GM12878 (cell line): ENCODE measurements at regions of chr20 and their contacts with region 1.

Region 1: DNA sequence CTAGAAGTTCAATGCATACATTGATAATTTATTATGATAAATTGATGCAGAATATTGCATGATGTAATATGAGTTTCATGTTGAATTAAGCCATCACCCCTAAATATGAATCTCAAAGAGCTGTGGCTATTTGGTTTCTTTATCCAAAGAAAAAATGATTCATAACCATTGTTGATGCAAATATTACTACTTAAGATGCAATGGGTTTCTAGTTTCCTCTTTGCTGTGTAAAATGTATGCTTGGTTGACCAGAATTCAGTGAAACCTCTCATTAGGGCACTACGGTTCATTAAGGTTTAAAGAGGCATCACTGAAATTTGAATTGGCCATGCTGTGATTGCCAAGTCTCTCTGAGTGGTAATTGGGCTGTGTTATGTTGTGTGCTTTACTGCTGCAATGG is 492.5 kb upstream of the FLRT3 start:
- DNase-seq: peak; percentile 86
- ATAC-seq: peak; percentile 82
- H3K4me3 ChIP-seq: no peak overlapping the region
- H3K27ac ChIP-seq: peak overlapping the region; percentile 46; the same call in 1 of the 2 replicates
- H3K4me1 ChIP-seq: peaks cover 40% of the 10 kb centered on the region
- H3K27me3 ChIP-seq: no peaks in the 10 kb centered on the region
- CTCF ChIP-seq: no peak
- EP300 ChIP-seq: peak; percentile 60 to 79; a peak in 3 of 4 replicates
- POLR2A ChIP-seq: no peak
- RAD21 ChIP-seq: no peak

Region 2: DNA sequence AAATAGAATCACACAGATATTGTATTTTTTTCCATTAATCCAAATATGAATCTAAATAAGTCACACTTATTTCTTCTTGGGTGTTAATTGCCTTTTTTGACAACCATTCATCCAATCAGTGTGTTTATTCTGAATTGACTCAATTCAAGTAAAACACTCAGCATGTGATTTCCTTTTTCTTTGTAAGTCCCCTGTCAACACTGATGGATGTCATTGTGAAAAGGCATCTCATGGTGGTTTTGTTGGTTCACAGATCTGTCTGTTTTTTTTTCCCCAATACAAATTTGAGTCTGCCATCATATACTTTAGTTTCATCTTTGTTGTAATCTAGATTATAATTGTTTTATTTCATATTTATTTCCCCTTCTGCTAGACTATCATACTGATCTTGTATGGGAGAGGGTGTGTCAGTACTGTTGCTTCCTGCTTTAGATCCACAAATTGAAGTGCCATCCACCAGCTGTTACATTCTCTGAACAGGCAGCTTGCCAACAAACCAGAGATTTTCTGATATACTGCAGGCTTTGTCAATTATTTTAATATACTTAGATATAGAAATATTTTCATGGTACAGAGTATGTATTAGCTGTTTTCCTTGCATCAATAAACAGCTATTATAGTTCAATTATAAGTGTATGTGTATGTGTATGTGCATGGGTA is 428.3 kb before region 1 on chr20:
- CTCF ChIA-PET with region 1: no interaction called
- POLR2A ChIA-PET with region 1: no interaction called
- RAD21 ChIA-PET with region 1: no interaction called
- SMC1A ChIA-PET with region 1: no interaction called
- in situ Hi-C with region 1: no loop called
- intact Hi-C with region 1: loop called (anchors 5 kb)
- DNase-seq: no peak
- ATAC-seq: peak; percentile 78
- H3K4me3 ChIP-seq: no peak overlapping the region
- H3K27ac ChIP-seq: no peak overlapping the region
- H3K4me1 ChIP-seq: no peaks in the 10 kb centered on the region
- H3K27me3 ChIP-seq: no peaks in the 10 kb centered on the region
- CTCF ChIP-seq: no peak
- EP300 ChIP-seq: peak; percentile 84 to 89; a peak in 3 of 4 replicates
- POLR2A ChIP-seq: no peak
- RAD21 ChIP-seq: no peak

Region 3: DNA sequence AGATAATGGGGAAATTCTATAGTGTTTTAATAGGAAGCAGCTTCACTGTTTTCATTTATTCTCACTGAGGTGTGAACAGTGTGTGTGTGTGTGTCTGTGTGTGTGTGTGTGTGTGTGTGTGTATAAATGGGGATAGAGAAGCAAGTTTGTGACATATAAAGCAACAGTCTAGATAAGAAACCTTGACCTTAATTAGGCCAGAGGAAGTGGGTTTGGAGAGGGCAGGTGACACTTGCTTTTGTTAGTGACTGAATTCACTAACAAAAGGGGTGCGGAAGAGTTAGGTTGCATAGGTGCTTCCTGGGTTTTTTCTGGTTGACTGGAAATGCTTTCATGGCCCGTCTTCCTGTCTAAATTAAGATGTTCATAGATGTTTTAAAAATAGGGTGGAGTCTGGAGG is 23.2 kb after region 1 on chr20:
- CTCF ChIA-PET with region 1: interaction called, 3 read pairs
- POLR2A ChIA-PET with region 1: no interaction called
- RAD21 ChIA-PET with region 1: no interaction called
- SMC1A ChIA-PET with region 1: interaction called, 8 read pairs
- in situ Hi-C with region 1: no loop called
- intact Hi-C with region 1: loop called (anchors 1 kb)
- DNase-seq: peak; percentile 71
- ATAC-seq: peak; percentile 95
- H3K4me3 ChIP-seq: no peak overlapping the region
- H3K27ac ChIP-seq: peak overlapping the region; percentile 15; the same call in 1 of the 2 replicates
- H3K4me1 ChIP-seq: peaks cover 7% of the 10 kb centered on the region
- H3K27me3 ChIP-seq: no peaks in the 10 kb centered on the region
- CTCF ChIP-seq: no peak
- EP300 ChIP-seq: peak; percentile 31 to 41; a peak in 1 of 4 replicates
- POLR2A ChIP-seq: no peak
- RAD21 ChIP-seq: no peak

Region 4: GRCh38 chr20:14878768-14879697 is 49.1 kb after region 1 on chr20:
- CTCF ChIA-PET with region 1: no interaction called
- POLR2A ChIA-PET with region 1: no interaction called
- RAD21 ChIA-PET with region 1: no interaction called
- SMC1A ChIA-PET with region 1: interaction called, 3 read pairs
- in situ Hi-C with region 1: no loop called
- intact Hi-C with region 1: loop called (anchors 2 kb)
- DNase-seq: no peak
- ATAC-seq: peak; percentile 91
- H3K4me3 ChIP-seq: no peak overlapping the region
- H3K27ac ChIP-seq: no peak overlapping the region
- H3K4me1 ChIP-seq: no peaks in the 10 kb centered on the region
- H3K27me3 ChIP-seq: no peaks in the 10 kb centered on the region
- CTCF ChIP-seq: no peak
- EP300 ChIP-seq: 0 out of 4 replicates have a peak, but pooled peaks of 1 of the 2 experiments have one; percentile 60
- POLR2A ChIP-seq: no peak
- RAD21 ChIP-seq: no peak

Region 5: GRCh38 chr20:15031546-15032351 is 201.8 kb after region 1 on chr20:
- CTCF ChIA-PET with region 1: no interaction called
- POLR2A ChIA-PET with region 1: no interaction called
- RAD21 ChIA-PET with region 1: no interaction called
- SMC1A ChIA-PET with region 1: no interaction called
- in situ Hi-C with region 1: no loop called
- intact Hi-C with region 1: no loop called
- DNase-seq: no peak
- ATAC-seq: no peak
- H3K4me3 ChIP-seq: no peak overlapping the region
- H3K27ac ChIP-seq: no peak overlapping the region
- H3K4me1 ChIP-seq: no peaks in the 10 kb centered on the region
- H3K27me3 ChIP-seq: no peaks in the 10 kb centered on the region
- CTCF ChIP-seq: no peak
- EP300 ChIP-seq: no peak
- POLR2A ChIP-seq: no peak
- RAD21 ChIP-seq: no peak

Region 6: DNA sequence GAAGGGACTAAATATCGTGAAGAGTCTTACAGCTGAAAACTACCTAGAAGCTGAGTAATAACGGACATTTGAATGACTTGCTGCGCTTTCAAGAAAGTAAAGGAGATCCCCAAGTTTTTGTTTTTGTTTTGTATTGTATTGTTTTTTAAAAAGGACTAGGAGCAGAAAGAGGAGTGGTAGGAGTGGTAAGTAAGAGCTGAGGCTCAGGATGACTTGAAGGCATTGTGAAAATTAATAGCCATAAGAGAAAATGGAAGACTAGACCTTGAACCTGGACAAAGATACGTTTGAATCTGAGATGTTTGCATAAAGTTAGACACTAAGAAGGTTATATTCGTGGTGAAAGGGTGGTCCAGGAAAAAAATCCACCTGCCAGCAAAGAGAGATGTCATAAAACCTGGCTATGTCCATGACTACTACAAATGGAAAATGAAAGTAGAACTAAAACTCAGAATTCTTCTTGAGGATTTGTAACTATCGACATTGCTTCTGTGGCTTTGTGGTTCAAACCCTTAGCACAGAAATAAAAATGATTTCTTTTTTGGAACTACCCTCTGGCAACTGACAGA is 332.3 kb after region 1 on chr20:
- CTCF ChIA-PET with region 1: no interaction called
- POLR2A ChIA-PET with region 1: no interaction called
- RAD21 ChIA-PET with region 1: no interaction called
- SMC1A ChIA-PET with region 1: no interaction called
- in situ Hi-C with region 1: no loop called
- intact Hi-C with region 1: loop called (anchors 5 kb)
- DNase-seq: peak; percentile 48
- ATAC-seq: peak; percentile 91
- H3K4me3 ChIP-seq: peak overlapping the region; percentile 29; the same call in 1 of the 2 replicates
- H3K27ac ChIP-seq: peak overlapping the region; percentile 38; the same call in 1 of the 2 replicates
- H3K4me1 ChIP-seq: peaks cover 9% of the 10 kb centered on the region
- H3K27me3 ChIP-seq: no peaks in the 10 kb centered on the region
- CTCF ChIP-seq: no peak
- EP300 ChIP-seq: 0 out of 4 replicates have a peak, but pooled peaks of 1 of the 2 experiments have one; percentile 10
- POLR2A ChIP-seq: no peak
- RAD21 ChIP-seq: no peak

Region 7: GRCh38 chr20:15317546-15318232 is 487.8 kb after region 1 on chr20:
- CTCF ChIA-PET with region 1: no interaction called
- POLR2A ChIA-PET with region 1: no interaction called
- RAD21 ChIA-PET with region 1: no interaction called
- SMC1A ChIA-PET with region 1: no interaction called
- in situ Hi-C with region 1: no loop called
- intact Hi-C with region 1: loop called (anchors 5 kb)
- DNase-seq: peak; percentile 69
- ATAC-seq: peak; percentile 90
- H3K4me3 ChIP-seq: 0 out of 2 replicates have a peak overlapping the region, but pooled peaks have one; percentile 33
- H3K27ac ChIP-seq: peak overlapping the region; percentile 93
- H3K4me1 ChIP-seq: peaks cover 21% of the 10 kb centered on the region
- H3K27me3 ChIP-seq: no peaks in the 10 kb centered on the region
- CTCF ChIP-seq: no peak
- EP300 ChIP-seq: 0 out of 4 replicates have a peak, but pooled peaks of 1 of the 2 experiments have one; percentile 43
- POLR2A ChIP-seq: no peak
- RAD21 ChIP-seq: no peak